PC-9 (cell line): ENCODE measurements at regions of chr10 and their contacts with region 1.

Region 1: DNA sequence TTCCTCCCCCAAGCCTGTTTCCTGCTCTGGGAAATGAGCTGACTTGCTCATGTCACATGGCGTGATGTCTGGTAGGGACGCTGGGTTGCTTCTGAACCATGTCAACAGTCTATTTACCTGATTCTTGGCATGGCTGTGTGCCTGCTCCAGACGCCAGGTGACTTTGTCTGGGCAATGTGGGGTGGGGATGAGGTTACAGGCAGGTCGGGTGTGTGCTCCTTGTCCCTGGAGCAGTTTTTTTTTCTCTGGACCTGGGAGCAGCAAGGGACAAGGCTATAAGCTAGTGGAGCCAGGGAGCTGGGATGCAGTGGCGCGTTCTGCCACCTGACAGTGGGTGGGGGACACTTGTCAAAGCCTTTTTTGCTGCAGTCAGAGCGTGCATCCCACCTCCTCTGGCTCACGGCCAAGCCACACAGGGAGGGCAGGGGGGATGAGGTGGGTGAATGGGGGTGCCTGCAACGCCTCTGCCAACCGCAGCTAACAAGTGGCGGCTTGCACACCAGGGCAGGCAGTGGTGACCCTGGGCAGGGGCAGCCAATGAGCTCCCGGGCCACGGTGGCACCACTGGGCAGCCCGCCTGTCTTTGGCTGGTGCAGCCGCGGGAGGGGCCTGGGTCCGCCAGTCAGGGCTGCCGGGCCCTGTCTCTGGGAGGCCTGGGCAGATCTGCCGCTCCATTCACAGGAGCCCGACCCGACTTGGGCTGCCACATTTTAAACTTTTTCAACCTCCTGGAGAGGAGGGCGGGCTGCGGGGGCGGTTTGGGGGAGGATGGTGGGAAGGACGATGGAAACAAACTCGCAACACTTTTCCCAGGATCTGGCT is 22.9 kb downstream of the DNAJB12 start:
- DNase-seq: peak; percentile 95 to 99
- H3K4me3 ChIP-seq: peak overlapping the region; percentile 36; the same call in 1 of the 2 replicates
- H3K27ac ChIP-seq: peak overlapping the region; percentile 95
- H3K4me1 ChIP-seq: peaks cover 64% of the 10 kb centered on the region
- H3K27me3 ChIP-seq: no peaks in the 10 kb centered on the region
- CTCF ChIP-seq: peak; percentile 44

Region 2: DNA sequence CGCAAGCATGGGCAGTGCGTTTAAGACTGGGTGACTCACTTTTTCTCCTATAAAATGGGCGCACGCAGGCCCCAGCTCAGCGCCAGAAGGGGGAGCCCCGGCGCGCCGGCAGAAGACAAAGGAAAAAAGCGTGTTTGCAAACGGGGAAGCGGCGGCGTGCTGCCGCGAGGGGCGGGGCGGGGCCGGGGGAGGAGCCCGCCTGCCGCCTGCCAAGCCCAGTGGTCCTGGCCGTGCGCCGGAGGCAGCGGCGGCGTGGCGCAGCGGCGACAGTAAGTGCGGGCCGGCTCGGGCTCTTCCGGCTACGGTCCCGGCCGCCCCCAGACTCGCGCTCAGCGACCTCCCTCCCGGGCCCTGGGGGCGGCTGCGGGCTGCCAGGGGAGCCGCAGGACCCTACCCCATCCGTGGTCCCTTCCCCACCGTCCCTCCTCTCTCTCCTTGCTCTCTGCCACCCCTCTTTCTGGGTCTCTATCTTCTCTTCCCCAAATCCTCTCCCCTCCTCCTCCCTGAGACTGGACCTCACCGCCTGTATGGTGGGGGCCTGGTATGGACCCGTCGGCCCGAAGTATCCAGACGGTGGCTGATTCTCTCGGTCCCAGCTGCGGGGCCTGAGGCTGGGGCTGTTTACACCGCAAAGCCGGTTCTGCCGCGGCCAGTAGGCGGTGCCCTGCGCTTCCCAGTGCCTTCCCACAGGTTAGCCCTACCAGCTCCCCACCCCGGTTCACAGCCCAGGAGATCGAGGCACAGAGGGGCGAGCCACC is 1012.6 kb before region 1 on chr10 and contains the start of gene SLC29A3:
- CTCF ChIA-PET with region 1: no interaction called
- POLR2A ChIA-PET with region 1: no interaction called
- intact Hi-C with region 1: loop called (anchors 10 kb)
- DNase-seq: peak; percentile 68 to 83
- H3K4me3 ChIP-seq: peak within 1 kb of the TSS; percentile 65
- H3K27ac ChIP-seq: no peak within 1 kb of the TSS
- H3K4me1 ChIP-seq: peaks cover 19% of the 10 kb centered on the region
- H3K27me3 ChIP-seq: no peaks in the 10 kb centered on the region
- CTCF ChIP-seq: peak; percentile 84
- total RNA-seq, gene SLC29A3: 24.1 and 35.7 TPM in 2 replicates

Region 3: GRCh38 chr10:71957546-71958275 is 374.1 kb before region 1 on chr10:
- CTCF ChIA-PET with region 1: interaction called, 6 read pairs
- POLR2A ChIA-PET with region 1: no interaction called
- intact Hi-C with region 1: loop called (anchors 1 kb)
- DNase-seq: no peak
- H3K4me3 ChIP-seq: no peak overlapping the region
- H3K27ac ChIP-seq: no peak overlapping the region
- H3K4me1 ChIP-seq: peaks cover 23% of the 10 kb centered on the region
- H3K27me3 ChIP-seq: no peaks in the 10 kb centered on the region
- CTCF ChIP-seq: no peak

Region 4: DNA sequence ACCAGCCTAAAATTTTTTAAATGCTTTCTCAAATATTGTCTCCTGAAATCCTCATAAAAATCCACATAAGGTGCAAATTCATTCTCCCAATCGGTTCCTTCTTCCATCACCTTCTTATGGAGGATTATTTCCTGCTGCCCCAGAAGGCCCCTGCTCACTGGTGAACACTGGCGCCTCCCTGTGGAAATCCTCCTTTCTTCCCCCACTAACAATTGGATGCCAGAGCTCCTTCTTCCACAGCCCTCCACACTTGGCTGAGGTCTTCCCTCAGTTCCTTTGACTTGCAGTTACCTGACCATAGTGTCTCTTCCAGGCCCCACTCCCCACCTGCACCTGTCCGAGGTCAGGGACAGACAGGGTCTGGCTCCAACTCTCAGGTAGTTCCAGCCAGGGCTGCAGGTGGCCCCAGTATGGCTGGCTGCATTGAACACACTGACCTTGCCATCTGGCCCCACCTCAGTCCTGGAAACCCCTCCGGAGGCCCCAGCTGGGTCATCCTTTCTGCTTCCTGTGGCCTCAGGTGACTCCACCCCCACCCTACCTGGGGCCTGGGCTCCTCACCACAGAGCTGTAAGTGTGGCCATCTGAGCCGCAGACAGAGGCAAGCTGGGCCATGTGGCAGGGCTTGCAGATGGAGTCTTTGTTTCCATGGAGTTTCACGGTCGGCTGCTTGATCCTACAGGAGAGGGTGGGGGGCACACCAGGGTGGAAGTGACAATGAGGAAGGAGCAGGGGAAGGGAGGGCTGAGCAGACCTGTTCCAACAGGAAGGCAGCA is 261.9 kb before region 1 on chr10:
- CTCF ChIA-PET with region 1: no interaction called
- POLR2A ChIA-PET with region 1: no interaction called
- intact Hi-C with region 1: no loop called
- DNase-seq: no peak
- H3K4me3 ChIP-seq: no peak overlapping the region
- H3K27ac ChIP-seq: no peak overlapping the region
- H3K4me1 ChIP-seq: peaks cover 8% of the 10 kb centered on the region; the same call in 1 of the 2 replicates
- H3K27me3 ChIP-seq: no peaks in the 10 kb centered on the region
- CTCF ChIP-seq: peak; percentile 33; the same call in 1 of the 2 replicates

Region 5: GRCh38 chr10:72126184-72126871 is 205.5 kb before region 1 on chr10:
- CTCF ChIA-PET with region 1: interaction called, 3 read pairs
- POLR2A ChIA-PET with region 1: interaction called, 11 read pairs
- intact Hi-C with region 1: loop called (anchors 1 kb)
- DNase-seq: no peak
- H3K4me3 ChIP-seq: no peak overlapping the region
- H3K27ac ChIP-seq: no peak overlapping the region
- H3K4me1 ChIP-seq: no peaks in the 10 kb centered on the region
- H3K27me3 ChIP-seq: no peaks in the 10 kb centered on the region
- CTCF ChIP-seq: peak; percentile 71

Region 6: DNA sequence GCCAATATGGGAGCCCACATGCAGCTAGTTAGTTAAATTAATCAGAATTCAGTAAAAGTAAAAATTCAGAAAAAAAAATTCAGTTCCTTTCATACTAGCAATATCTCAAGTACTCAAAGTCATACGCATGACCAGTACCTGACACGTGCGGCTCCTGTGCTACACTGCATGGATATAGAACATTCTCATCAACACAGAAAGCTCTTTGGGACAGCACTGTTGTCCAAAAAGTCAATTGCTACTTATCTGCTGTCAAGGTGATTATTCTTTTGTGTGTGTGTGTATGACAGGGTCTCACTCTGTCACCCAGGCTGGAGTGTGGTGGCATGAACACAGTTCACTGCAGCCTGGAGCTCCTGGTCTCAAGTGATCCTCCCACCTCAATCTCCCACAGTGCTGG is 130.9 kb before region 1 on chr10:
- CTCF ChIA-PET with region 1: no interaction called
- POLR2A ChIA-PET with region 1: no interaction called
- intact Hi-C with region 1: no loop called
- DNase-seq: no peak
- H3K4me3 ChIP-seq: no peak overlapping the region
- H3K27ac ChIP-seq: no peak overlapping the region
- H3K4me1 ChIP-seq: peaks cover 13% of the 10 kb centered on the region
- H3K27me3 ChIP-seq: no peaks in the 10 kb centered on the region
- CTCF ChIP-seq: no peak

Region 7: GRCh38 chr10:72248468-72249151 is 83.2 kb before region 1 on chr10:
- CTCF ChIA-PET with region 1: interaction called, 4 read pairs
- POLR2A ChIA-PET with region 1: no interaction called
- intact Hi-C with region 1: loop called (anchors 1 kb)
- DNase-seq: peak; percentile 52 to 79
- H3K4me3 ChIP-seq: no peak overlapping the region
- H3K27ac ChIP-seq: peak overlapping the region; percentile 48
- H3K4me1 ChIP-seq: peaks cover 53% of the 10 kb centered on the region
- H3K27me3 ChIP-seq: no peaks in the 10 kb centered on the region
- CTCF ChIP-seq: no peak

Region 8: DNA sequence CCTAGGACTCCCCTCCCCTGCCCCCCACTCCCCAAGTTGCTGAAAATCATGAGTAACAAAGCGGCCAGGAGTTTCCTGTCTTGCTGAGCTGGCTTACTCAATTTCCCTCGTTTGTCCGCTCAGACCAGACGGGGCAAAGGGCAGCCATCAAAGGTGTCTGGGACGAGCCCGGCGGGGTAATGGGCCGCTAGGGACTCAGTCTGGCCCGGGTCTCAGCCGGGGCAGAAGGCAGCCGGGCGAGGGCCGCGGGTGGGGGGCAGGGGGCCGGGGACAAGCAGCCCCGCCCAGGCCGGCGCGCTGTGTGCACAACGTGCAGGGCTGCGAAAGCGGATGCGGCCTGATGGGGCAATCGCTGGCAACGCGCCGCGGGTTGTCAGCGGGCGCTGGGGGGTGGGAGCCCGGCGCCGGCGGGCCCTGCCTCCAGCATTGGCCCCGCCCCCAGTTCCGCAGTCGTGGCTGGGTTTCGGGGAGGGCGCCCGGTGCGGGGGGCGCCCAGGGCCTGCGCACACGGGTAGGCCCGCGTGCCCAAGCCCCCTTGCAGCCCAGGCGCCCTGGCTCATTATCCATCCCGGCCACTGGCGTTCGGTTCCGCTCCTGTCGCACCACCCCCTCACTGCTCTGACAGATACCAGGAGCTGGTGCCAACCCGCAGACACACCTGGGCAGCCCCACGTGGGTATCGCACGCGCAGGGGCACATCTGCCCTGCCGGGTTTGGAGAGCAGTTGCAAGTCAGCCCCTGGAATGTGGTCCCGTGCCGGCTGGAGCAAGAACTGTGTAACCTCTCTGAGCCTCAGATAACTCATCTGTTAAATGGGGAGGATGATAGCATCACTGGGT is 12.2 kb before region 1 on chr10:
- CTCF ChIA-PET with region 1: interaction called, 13 read pairs
- POLR2A ChIA-PET with region 1: interaction called, 21 read pairs
- intact Hi-C with region 1: loop called (anchors 1 kb)
- DNase-seq: peak; percentile 91 to 95
- H3K4me3 ChIP-seq: peak overlapping the region; percentile 59
- H3K27ac ChIP-seq: peak overlapping the region; percentile 99
- H3K4me1 ChIP-seq: peaks cover 95% of the 10 kb centered on the region
- H3K27me3 ChIP-seq: no peaks in the 10 kb centered on the region
- CTCF ChIP-seq: no peak

Region 9: GRCh38 chr10:72649291-72649690 is 317.5 kb after region 1 on chr10:
- CTCF ChIA-PET with region 1: no interaction called
- POLR2A ChIA-PET with region 1: no interaction called
- intact Hi-C with region 1: no loop called
- DNase-seq: no peak
- H3K4me3 ChIP-seq: no peak overlapping the region
- H3K27ac ChIP-seq: no peak overlapping the region
- H3K4me1 ChIP-seq: no peaks in the 10 kb centered on the region
- H3K27me3 ChIP-seq: no peaks in the 10 kb centered on the region
- CTCF ChIP-seq: no peak